MCF 10A (cell line): ENCODE measurements at regions of chr2 and their contacts with region 1.

Region 1: DNA sequence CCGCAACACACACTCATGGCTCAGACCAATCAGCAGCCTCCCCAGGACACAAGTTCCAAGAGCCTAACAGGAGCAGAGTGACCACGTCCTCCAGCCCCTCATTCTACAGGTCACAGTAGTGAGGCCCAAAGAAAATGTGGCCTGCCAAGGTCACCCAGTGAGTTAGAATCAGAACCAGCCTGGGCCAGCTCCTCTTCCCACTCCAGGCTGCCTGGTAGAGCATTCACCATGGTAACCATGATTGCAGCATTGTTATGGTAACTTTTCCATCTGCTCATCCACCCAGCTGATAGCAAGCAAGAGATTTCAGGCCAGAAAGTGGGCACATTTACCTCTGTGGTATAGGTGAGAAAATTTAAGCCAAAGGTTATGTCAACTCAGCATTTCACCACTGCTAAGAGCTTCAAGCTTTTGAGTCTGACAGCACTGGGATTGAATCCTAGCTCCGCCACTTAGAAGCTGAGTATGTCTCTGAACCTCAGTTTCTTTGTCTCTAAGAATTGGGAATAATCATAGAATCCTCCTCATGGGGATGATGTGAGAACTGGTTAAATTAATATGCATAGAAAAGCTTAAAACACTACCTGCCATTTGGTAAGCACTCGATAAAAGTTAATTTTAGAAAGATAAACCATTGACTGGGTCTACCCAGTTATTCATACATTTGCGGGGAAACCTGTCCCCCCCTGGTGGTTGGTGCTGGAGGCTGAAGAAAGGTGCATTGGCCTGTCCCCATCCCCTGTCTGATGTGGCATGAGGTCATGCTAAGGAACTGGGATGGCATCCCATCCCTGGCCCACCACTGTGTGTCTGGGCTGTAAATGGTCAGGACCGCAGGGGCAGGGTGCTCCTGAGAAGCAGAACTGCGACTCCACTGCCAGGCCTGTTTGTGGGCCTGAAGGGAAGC is 181.5 kb downstream of the KLHL29 start:
- DNase-seq: peak; percentile 40
- H3K4me3 Mint-ChIP-seq: no peak overlapping the region
- H3K27ac Mint-ChIP-seq: no peak overlapping the region
- H3K4me1 Mint-ChIP-seq: peaks cover 16% of the 10 kb centered on the region
- H3K27me3 Mint-ChIP-seq: no peaks in the 10 kb centered on the region
- CTCF ChIP-seq: peak; percentile 20

Region 2: DNA sequence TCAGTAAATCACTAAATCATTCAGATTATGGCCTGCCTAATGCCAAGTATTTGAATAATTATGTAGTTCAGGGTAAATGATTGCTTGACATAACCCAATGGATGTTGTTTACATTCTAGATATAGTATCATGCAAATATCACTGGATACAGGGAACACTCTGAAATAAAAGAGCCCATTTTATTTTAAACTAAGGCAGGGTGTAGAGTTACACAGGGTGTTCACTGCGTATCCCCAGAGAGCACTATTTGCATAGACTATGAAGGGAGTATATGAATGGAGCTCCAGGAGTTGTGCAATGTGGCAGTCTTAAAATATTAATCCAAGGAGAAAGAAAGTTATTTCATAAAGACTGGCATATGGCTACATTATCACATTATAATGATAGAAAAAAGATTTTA is 882.6 kb before region 1 on chr2:
- CTCF ChIA-PET with region 1: no interaction called
- POLR2A ChIA-PET with region 1: no interaction called
- intact Hi-C with region 1: loop called (anchors 10 kb)
- DNase-seq: no peak
- H3K4me3 Mint-ChIP-seq: no peak overlapping the region
- H3K27ac Mint-ChIP-seq: no peak overlapping the region
- H3K4me1 Mint-ChIP-seq: no peaks in the 10 kb centered on the region
- H3K27me3 Mint-ChIP-seq: no peaks in the 10 kb centered on the region
- CTCF ChIP-seq: no peak